Activated CD4-positive, alpha-beta T cell treated with anti-CD3 and anti-CD28 coated beads, Interleukin-2, amount 10 ng/mL, durations not matched to agents 24 days and 14 days (primary cell): ENCODE measurements at regions of chr9 and their contacts with region 1.

Region 1: DNA sequence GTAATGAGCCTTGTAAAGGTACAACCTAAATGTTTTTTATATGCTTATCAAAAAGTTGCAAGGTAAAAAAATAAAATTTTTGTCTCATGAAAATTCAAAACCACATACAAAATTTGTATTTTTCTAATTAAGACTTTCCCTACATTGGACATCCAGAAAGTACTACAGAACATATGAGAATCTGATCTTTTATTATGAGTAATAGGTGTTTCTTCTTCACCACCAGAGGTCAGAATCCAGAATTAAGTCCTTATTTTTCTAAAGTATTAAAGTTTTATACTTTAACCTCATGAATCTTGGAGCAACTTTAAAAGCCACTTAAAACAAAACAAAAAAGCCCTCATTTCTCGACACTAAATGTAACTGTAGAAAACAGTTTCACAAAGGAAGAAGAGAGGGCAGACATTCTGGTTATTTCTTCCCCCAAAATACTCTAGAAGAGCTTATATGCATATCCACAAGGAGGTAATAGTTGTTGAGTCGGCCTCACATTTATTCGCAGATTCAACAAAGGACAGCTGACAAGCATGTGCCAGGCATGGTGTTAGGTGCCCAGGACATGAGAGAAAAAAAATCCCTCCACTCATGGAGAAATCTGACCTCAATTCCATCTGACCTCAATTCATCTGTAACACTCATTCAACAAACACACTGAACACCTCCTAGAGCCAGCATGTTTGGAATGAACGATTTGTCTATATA is 69.3 kb downstream of the MLLT3 start:
- DNase-seq: peak; percentile 69
- H3K4me3 Mint-ChIP-seq: peak overlapping the region; percentile 57
- H3K27ac Mint-ChIP-seq: peak overlapping the region; percentile 82
- H3K4me1 Mint-ChIP-seq: peaks cover 67% of the 10 kb centered on the region
- H3K27me3 Mint-ChIP-seq: no peaks in the 10 kb centered on the region

Region 2: DNA sequence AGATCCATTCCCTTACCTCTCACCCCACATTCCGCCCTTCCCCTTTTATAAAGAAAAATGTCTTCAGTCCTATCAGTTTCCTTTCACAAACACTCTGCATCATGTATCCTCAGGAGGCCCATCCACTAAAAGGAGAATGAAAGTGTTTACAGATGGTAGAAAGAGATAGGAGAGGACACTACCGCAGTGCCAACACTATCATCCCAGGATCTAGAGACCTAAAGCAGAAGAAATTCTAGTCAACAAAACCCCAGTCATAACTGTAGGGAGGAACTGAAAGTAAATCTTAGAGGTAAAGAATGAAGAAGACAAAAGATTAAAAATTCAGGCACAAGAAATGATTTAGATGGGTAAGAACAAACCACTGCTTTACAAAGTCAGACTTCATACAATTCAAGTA is 44.8 kb before region 1 on chr9:
- intact Hi-C with region 1: loop called (anchors 1 kb)
- DNase-seq: peak; percentile 79
- H3K4me3 Mint-ChIP-seq: peak overlapping the region; percentile 61
- H3K27ac Mint-ChIP-seq: peak overlapping the region; percentile 77
- H3K4me1 Mint-ChIP-seq: peaks cover 67% of the 10 kb centered on the region
- H3K27me3 Mint-ChIP-seq: no peaks in the 10 kb centered on the region